Activated CD4-positive, alpha-beta T cell treated with anti-CD3 and anti-CD28 coated beads for 36 hours (primary cell): ENCODE measurements at regions of chr16 and their contacts with region 1.

Region 1: DNA sequence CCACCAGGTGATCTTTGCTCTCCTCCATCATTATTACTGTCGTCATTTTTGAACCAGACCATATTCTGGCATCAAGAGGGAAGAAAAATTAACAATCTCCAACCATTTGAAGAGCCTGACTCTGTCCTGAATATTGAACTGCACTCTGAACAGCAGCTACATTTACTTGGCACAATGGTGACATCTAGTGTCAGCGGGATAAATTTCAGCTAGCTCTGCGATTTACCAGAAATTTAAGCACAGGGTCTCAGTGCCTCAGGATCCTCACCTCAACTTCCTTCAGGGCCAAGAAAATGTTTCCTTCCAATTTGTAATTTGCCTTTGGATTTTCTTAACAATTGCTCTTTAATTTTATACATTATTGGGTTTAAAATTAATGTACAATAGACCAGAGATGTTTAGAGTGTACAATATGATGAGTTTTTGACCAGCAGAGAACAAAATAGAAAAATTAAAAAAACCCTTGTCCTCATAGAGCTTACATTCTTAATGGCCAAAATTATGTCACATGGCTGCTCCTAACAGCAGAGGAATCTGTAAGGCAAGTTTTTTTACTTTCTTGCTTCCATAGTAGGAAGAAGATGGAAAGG is 10.7 kb upstream of the ZNF19 start:
- DNase-seq: peak; percentile 61
- ATAC-seq: peak; percentile 75
- H3K4me3 Mint-ChIP-seq: no peak overlapping the region
- H3K27ac Mint-ChIP-seq: no peak overlapping the region
- H3K4me1 Mint-ChIP-seq: no peaks in the 10 kb centered on the region
- H3K27me3 Mint-ChIP-seq: peaks cover 6% of the 10 kb centered on the region

Region 2: DNA sequence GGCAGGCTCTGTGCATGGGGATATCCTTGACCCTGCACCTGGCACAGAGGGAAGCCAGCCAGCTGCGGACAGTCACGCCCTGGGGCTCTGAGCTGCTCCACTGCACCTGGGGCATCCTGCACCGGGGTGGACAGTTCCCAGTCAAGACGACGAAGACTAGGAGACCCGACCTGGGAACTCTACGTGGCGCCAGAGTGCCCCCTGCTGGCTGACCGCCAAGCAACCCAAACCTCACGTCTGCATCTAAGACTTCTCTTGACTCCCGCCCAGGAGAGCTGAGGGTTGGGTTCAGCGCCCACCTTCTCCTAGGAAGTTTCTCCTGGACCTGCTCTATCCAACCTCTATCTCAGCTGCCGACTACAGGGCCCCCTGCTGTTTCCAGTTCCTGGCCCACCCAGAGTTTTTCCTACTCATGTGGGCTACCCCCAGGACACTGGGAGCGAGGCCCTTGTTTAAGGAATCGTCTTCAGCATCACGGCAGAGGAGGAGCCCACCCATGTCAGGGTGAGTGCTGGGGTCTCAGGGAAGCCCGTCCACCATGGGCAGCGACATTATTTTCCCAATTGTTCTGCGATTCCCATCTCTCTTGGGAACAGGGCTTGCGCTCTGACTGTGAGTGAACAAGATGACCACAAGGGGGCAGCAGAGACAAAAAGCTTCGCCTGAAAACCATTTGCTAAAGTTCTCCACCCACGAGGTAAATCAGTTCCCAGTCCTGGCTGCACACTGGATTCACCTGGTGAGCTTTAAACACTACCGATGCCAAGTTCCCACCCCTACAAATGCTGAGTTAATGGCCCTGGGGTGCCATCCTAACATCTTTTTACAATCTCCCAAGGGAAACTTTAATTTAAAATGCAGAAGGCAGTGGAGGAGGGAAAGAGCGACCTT is 87.4 kb before region 1 on chr16:
- CTCF ChIA-PET with region 1: interaction called, 86 read pairs
- POLR2A ChIA-PET with region 1: no interaction called
- intact Hi-C with region 1: loop called (anchors 1 kb)
- DNase-seq: peak; percentile 82
- ATAC-seq: peak; percentile 85
- H3K4me3 Mint-ChIP-seq: no peak overlapping the region
- H3K27ac Mint-ChIP-seq: no peak overlapping the region
- H3K4me1 Mint-ChIP-seq: no peaks in the 10 kb centered on the region
- H3K27me3 Mint-ChIP-seq: peaks cover 32% of the 10 kb centered on the region

Region 3: DNA sequence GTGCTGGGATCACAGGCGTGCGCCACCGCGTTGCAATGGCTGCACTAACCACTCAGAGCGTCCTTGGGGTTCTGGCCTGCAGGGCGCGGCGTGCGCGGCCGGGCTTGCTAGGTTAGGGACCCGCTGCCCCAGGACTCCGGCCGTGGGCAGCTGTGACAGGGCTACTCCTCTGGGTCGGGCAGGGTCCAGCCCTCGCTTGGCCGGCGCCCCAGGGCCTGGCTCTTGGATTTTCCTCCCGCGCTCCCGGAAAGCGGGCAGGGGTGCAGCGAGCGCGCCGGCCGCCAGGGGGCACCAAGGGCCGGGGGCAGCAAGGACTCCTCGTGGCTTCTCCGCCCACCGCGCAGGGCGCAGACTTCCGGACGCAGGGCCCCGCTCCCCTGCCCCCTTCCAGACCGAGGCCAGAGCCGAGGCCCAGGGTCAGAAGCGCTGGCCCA is 58.5 kb before region 1 on chr16:
- CTCF ChIA-PET with region 1: interaction called, 8 read pairs
- POLR2A ChIA-PET with region 1: no interaction called
- intact Hi-C with region 1: loop called (anchors 1 to 5 kb)
- DNase-seq: peak; percentile 70
- ATAC-seq: peak; percentile 64
- H3K4me3 Mint-ChIP-seq: no peak overlapping the region
- H3K27ac Mint-ChIP-seq: no peak overlapping the region
- H3K4me1 Mint-ChIP-seq: no peaks in the 10 kb centered on the region
- H3K27me3 Mint-ChIP-seq: peaks cover 22% of the 10 kb centered on the region

Region 4: DNA sequence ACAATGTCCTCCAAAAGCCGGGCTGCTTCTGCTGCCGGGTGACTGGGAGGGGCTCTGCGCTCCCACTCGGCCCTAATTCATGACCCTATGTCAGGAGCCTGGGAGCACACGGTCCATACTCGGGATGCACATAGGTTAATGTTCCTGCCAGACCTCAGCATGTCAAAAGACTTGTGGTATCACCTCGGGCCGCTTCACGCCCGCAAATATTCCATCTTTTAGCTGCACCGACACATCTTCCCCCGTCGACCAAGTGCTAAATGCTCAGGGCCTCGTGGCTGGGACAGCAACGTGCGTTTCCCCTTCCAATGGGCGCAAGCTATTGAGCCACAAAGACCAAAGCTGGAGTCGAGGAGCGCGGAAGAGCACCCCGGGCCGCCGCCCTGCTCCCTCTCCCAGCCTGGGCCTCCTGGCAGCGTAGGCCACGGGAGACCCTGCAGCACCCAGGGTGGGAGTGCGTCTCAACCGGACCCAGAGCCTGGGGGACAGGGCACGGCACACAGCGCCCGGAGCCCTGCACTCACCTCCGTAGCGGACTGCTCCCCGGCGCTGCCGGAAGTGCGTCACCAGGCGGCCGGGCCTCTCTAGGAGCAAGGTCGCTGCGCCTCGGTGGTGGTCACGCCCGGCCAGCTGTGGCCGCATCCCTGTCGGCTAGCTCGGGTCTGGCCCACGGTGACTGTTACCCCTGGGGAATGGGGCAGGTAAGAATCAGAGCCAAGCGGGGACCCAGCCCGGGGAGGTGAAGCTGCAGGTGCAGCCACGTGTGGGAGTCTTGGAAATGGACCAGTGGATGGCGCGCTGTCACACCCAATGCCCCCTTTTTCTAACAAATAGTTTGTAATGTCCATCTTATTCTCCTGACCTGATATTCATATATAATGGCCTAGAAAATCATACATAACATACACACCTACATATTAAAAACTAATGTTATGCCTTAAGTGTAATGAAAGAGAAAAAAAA is 37.9 kb before region 1 on chr16 and contains the start of gene ZNF23:
- CTCF ChIA-PET with region 1: interaction called, 10 read pairs
- POLR2A ChIA-PET with region 1: no interaction called
- intact Hi-C with region 1: no loop called
- DNase-seq: peak; percentile 88
- ATAC-seq: peak; percentile 96
- H3K4me3 Mint-ChIP-seq: peak within 1 kb of the TSS; percentile 76
- H3K27ac Mint-ChIP-seq: peak within 1 kb of the TSS; percentile 96
- H3K4me1 Mint-ChIP-seq: peaks cover 19% of the 10 kb centered on the region
- H3K27me3 Mint-ChIP-seq: no peaks in the 10 kb centered on the region
- total RNA-seq, gene ZNF23: 9.6 to 10.9 TPM